GM12878 (cell line): ENCODE measurements at regions of chr6 and their contacts with region 1.

Region 1: GRCh38 chr6:13355043-13355951 is 27.0 kb upstream of the TBC1D7 start:
- DNase-seq: peak; percentile 66
- ATAC-seq: peak; percentile 79
- H3K4me3 ChIP-seq: peak overlapping the region; percentile 58
- H3K27ac ChIP-seq: peak overlapping the region; percentile 94
- H3K4me1 ChIP-seq: peaks cover 36% of the 10 kb centered on the region
- H3K27me3 ChIP-seq: no peaks in the 10 kb centered on the region
- CTCF ChIP-seq: no peak
- EP300 ChIP-seq: 0 out of 4 replicates have a peak, but pooled peaks of 1 of the 2 experiments have one; percentile 25
- POLR2A ChIP-seq: no peak
- RAD21 ChIP-seq: no peak

Region 2: GRCh38 chr6:13342414-13343019 is 12.8 kb before region 1 on chr6:
- CTCF ChIA-PET with region 1: interaction called, 40 read pairs
- POLR2A ChIA-PET with region 1: interaction called, 8 read pairs
- RAD21 ChIA-PET with region 1: interaction called, 54 read pairs
- SMC1A ChIA-PET with region 1: interaction called, 66 read pairs
- in situ Hi-C with region 1: no loop called
- intact Hi-C with region 1: no loop called
- DNase-seq: no peak
- ATAC-seq: no peak
- H3K4me3 ChIP-seq: no peak overlapping the region
- H3K27ac ChIP-seq: no peak overlapping the region
- H3K4me1 ChIP-seq: peaks cover 11% of the 10 kb centered on the region; the same call in 1 of the 2 replicates
- H3K27me3 ChIP-seq: no peaks in the 10 kb centered on the region
- CTCF ChIP-seq: no peak
- EP300 ChIP-seq: no peak
- POLR2A ChIP-seq: no peak
- RAD21 ChIP-seq: no peak

Region 3: GRCh38 chr6:13383328-13384163 is 28.2 kb after region 1 on chr6:
- CTCF ChIA-PET with region 1: interaction called, 29 read pairs
- POLR2A ChIA-PET with region 1: interaction called, 10 read pairs
- RAD21 ChIA-PET with region 1: interaction called, 43 read pairs
- SMC1A ChIA-PET with region 1: interaction called, 87 read pairs
- in situ Hi-C with region 1: no loop called
- intact Hi-C with region 1: no loop called
- DNase-seq: peak; percentile 91
- ATAC-seq: peak; percentile 98
- H3K4me3 ChIP-seq: no peak overlapping the region
- H3K27ac ChIP-seq: peak overlapping the region; percentile 93
- H3K4me1 ChIP-seq: peaks cover 45% of the 10 kb centered on the region
- H3K27me3 ChIP-seq: no peaks in the 10 kb centered on the region
- CTCF ChIP-seq: peak; percentile 40 to 67 (median 48); a peak in 5 of 6 replicates
- EP300 ChIP-seq: peak in 1 of 2 experiments; percentile 54; a peak in 2 of 4 replicates
- POLR2A ChIP-seq: no peak
- RAD21 ChIP-seq: peak; percentile 83